Lower leg skin (tissue), 4 donors: ENCODE measurements at regions of chr13 and their contacts with region 1.

Region 1: DNA sequence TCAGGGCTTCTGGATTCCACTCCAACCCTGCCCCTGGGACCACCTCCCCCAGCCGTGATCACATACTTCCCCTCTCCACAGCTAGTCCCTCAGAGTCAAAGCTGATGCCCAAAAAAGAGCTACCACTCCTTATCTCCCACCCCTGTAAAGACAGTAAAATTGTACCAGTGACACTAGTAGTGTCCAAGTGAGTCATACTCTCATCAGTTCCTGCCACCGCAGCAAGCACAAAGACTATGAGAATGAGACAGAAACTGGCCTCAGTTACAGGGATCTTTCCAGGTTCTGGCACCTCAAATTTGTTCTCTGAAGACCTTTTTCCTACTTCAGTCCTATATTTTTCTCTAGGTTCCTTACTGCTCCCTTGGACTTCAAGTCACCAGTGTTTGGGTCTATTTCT is 144.2 kb downstream of the SPRY2 start:
- DNase-seq: no peak
- H3K4me3 ChIP-seq: no peak overlapping the region
- CTCF ChIP-seq: no peak
- POLR2A ChIP-seq: no peak

Region 2: DNA sequence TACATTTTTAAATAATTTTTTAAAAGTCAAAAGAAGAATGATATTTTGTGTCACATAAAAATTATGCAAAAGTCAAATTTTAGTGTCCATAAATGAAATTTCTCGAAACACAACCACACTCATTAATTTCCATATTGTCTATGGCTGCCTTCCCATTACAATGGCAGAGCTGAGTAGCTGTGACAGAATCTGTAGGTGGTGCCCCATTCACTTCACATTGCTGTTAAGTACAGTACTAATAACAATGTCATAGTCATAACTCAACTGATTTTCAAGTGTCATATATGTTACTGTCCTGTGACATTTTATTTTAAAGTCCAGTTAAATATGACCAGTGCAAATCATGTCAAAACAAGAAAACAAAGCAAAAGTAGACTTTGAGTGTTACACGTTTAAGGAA is 29.9 kb after region 1 on chr13:
- intact Hi-C with region 1: loop called (anchors 1 kb)
- DNase-seq: no peak
- H3K4me3 ChIP-seq: no peak overlapping the region
- CTCF ChIP-seq: no peak
- POLR2A ChIP-seq: no peak